ENCODE measurements at regions of chr22 and their contacts with region 1.

Region 1: GRCh38 chr22:36781656-36782627 is 6.0 kb upstream of the IFT27 start:
- DNase-seq: peak; percentile 80 to 86 (median 82)
- H3K4me3 ChIP-seq: no peak overlapping the region
- H3K4me3 Mint-ChIP-seq: peak overlapping the region in 2 of 8 donors; percentile 46 to 75
- H3K27ac ChIP-seq: no peak overlapping the region
- H3K27ac Mint-ChIP-seq: peak overlapping the region; percentile 14 to 86 (median 67)
- H3K4me1 ChIP-seq: peaks cover 12% of the 10 kb centered on the region
- H3K4me1 Mint-ChIP-seq: peaks cover 6 to 24% (median 17%) of the 10 kb centered on the region in 4 donors
- H3K27me3 ChIP-seq: peaks cover 5% of the 10 kb centered on the region
- H3K27me3 Mint-ChIP-seq: peaks cover 3 to 4% of the 10 kb centered on the region in 2 donors

Region 2: GRCh38 chr22:36699915-36700314 is 82.0 kb before region 1 on chr22:
- CTCF ChIA-PET with region 1: no interaction called
- POLR2A ChIA-PET with region 1: no interaction called
- intact Hi-C with region 1: no loop called
- DNase-seq: no peak
- H3K4me3 ChIP-seq: no peak overlapping the region
- H3K4me3 Mint-ChIP-seq: no peak overlapping the region
- H3K27ac ChIP-seq: no peak overlapping the region
- H3K27ac Mint-ChIP-seq: no peak overlapping the region
- H3K4me1 ChIP-seq: no peaks in the 10 kb centered on the region
- H3K4me1 Mint-ChIP-seq: peaks cover 4 to 10% (median 8%) of the 10 kb centered on the region in 4 donors
- H3K27me3 ChIP-seq: peaks cover 9% of the 10 kb centered on the region
- H3K27me3 Mint-ChIP-seq: peaks cover 42 to 62% of the 10 kb centered on the region in 2 donors

Region 3: DNA sequence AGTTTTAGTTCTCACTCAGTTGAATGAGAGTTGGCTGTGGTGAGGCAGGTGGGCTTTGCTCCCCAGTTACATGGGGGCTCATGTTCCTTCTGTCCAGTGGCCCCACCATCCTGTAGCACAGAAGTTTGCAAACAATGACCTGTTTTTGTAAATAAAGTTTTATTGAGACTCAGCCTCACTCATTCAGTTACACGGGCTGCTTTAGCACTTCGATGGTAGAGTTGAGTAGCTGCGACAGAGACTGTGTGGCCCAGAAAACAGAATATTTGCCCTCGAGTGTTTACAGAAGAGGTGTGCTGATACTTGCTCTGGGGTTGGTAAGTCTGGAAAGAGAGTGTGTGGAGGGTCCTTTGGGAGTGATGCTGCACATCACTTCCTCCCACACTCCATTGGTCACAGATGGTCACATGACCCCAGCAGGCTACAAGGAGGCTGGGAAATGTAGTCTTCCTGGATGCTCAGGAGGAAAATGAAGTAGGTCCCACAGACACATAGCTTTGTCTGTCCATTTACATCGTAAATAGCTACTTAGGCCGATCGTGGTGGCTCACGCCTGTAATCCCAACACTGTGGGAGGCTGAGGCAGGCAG is 40.6 kb before region 1 on chr22:
- CTCF ChIA-PET with region 1: no interaction called
- POLR2A ChIA-PET with region 1: no interaction called
- intact Hi-C with region 1: no loop called
- DNase-seq: no peak
- H3K4me3 ChIP-seq: no peak overlapping the region
- H3K4me3 Mint-ChIP-seq: no peak overlapping the region
- H3K27ac ChIP-seq: no peak overlapping the region
- H3K27ac Mint-ChIP-seq: no peak overlapping the region
- H3K4me1 ChIP-seq: no peaks in the 10 kb centered on the region
- H3K4me1 Mint-ChIP-seq: no peaks in the 10 kb centered on the region
- H3K27me3 ChIP-seq: no peaks in the 10 kb centered on the region
- H3K27me3 Mint-ChIP-seq: peaks cover 12 to 19% of the 10 kb centered on the region in 2 donors

Region 4: GRCh38 chr22:36757668-36758211 is 24.2 kb before region 1 on chr22:
- CTCF ChIA-PET with region 1: interaction called, 10 read pairs
- POLR2A ChIA-PET with region 1: no interaction called
- intact Hi-C with region 1: no loop called
- DNase-seq: peak; percentile 56 to 71 (median 64)
- H3K4me3 ChIP-seq: no peak overlapping the region
- H3K4me3 Mint-ChIP-seq: no peak overlapping the region
- H3K27ac ChIP-seq: no peak overlapping the region
- H3K27ac Mint-ChIP-seq: no peak overlapping the region
- H3K4me1 ChIP-seq: peaks cover 5% of the 10 kb centered on the region
- H3K4me1 Mint-ChIP-seq: peaks cover 2 to 13% (median 5%) of the 10 kb centered on the region in 4 donors
- H3K27me3 ChIP-seq: peaks cover 4% of the 10 kb centered on the region
- H3K27me3 Mint-ChIP-seq: peaks cover 6 to 8% of the 10 kb centered on the region in 2 donors

Region 5: DNA sequence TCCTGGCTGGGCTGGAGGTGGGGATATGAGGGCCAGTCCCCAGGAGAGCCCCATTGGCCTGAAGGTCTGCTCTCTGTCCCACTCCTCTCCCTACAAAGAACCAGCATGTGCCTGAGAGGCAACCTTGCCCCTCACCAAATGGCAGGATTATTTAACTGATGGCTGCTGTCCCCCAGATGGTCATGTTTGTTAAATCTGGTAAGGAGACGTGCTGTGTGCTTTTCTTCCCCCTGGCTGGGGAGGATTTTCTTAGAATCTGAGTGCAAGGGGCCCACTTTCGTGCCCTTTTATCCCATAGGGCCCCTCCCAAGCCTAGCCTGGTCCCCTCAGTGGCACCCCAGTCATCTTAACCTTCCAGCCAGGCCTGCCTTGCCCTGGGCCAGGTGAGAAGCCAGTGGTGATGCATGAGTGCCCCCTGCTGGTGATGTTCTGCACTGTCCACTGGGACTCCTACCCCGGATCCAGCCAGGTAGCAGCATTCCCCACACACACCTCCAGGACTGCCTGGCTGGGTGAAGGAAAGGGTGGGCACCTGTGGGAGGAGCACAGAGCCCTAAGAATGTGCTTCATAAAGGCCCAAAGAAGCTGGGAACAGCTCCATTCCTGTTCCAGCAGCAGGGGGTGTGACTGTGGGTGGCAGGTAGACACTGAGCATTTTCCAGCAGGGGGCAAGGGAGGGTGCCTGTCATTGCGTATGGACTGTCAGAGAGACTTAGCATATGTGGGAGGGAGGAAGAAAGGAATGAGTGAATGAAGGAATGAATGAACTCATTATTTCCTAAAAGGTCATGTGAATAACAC is 675.4 kb after region 1 on chr22:
- CTCF ChIA-PET with region 1: no interaction called
- POLR2A ChIA-PET with region 1: no interaction called
- intact Hi-C with region 1: loop called (anchors 5 kb)
- DNase-seq: peak; percentile 74 to 80 (median 77)
- H3K4me3 ChIP-seq: no peak overlapping the region
- H3K4me3 Mint-ChIP-seq: no peak overlapping the region
- H3K27ac ChIP-seq: no peak overlapping the region
- H3K27ac Mint-ChIP-seq: peak overlapping the region in 6 of 7 donors; percentile 15 to 57 (median 22)
- H3K4me1 ChIP-seq: peaks cover 3% of the 10 kb centered on the region
- H3K4me1 Mint-ChIP-seq: peaks cover 0 to 7% (median 5%) of the 10 kb centered on the region in 4 donors
- H3K27me3 ChIP-seq: no peaks in the 10 kb centered on the region
- H3K27me3 Mint-ChIP-seq: no peaks in the 10 kb centered on the region